Vagina (tissue), 2 donors: ENCODE measurements at regions of chr17 and their contacts with region 1.

Region 1: GRCh38 chr17:76121932-76122430 is 18.4 kb upstream of the EXOC7 start:
- DNase-seq: no peak
- H3K4me3 ChIP-seq: peak overlapping the region; percentile 40 to 42
- H3K27ac ChIP-seq: peak overlapping the region; percentile 57
- H3K4me1 ChIP-seq: peaks cover 10% of the 10 kb centered on the region
- H3K27me3 ChIP-seq: no peaks in the 10 kb centered on the region
- CTCF ChIP-seq: no peak
- POLR2A ChIP-seq: no peak

Region 2: DNA sequence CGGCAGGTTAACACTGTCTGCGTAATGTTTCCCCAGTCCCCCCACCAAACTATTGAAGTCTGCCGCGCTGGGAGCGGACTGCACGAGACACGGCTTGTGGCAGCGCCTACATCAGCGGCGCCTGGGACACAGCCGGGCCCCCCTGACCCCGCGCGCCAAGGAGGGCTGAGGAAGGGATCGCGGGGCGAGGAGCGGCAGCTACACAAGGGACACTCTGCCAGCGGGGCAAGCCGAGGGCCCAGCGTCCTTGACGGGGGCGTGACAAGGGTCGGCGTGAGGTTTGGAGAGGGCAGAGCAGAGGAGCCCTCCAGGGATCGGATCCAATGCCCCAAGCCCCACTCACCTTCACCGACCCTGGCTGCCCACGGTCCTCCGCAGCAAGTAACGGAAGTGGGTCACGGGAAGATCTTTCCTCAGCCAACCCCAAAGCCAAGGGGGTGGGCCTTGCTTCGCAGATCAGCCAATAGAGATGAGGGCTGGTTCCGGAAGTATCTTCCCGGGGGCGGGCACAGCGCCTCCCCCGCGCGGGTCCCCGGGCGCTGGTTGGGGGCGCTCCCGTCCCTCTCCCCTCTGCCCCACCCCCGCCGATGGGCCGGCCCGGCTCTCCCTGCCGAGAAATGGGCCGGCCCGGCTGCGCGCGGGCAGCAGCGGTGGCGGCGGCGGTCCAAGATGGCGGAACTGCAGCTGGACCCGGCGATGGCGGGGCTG is 1075.2 kb before region 1 on chr17 and contains the starts of genes ATP5PD and KCTD2:
- intact Hi-C with region 1: no loop called
- DNase-seq: peak in 1 of 2 donors; percentile 97
- H3K4me3 ChIP-seq: peak within 1 kb of the TSS; percentile 84 to 90
- H3K27ac ChIP-seq: peak within 1 kb of the TSS; percentile 95
- H3K4me1 ChIP-seq: peaks cover 36% of the 10 kb centered on the region
- H3K27me3 ChIP-seq: no peaks in the 10 kb centered on the region
- CTCF ChIP-seq: no peak
- POLR2A ChIP-seq: peak in 1 of 2 donors; percentile 87
- total RNA-seq, gene ATP5PD: 149 TPM
- total RNA-seq, gene KCTD2: 17.2 TPM

Region 3: GRCh38 chr17:76166168-76166567 is 44.2 kb after region 1 on chr17:
- intact Hi-C with region 1: no loop called
- DNase-seq: no peak
- H3K4me3 ChIP-seq: no peak overlapping the region
- H3K27ac ChIP-seq: no peak overlapping the region
- H3K4me1 ChIP-seq: no peaks in the 10 kb centered on the region
- H3K27me3 ChIP-seq: no peaks in the 10 kb centered on the region
- CTCF ChIP-seq: no peak
- POLR2A ChIP-seq: no peak

Region 4: GRCh38 chr17:76182016-76182764 is 60.2 kb after region 1 on chr17:
- intact Hi-C with region 1: loop called (anchors 5 kb)
- DNase-seq: no peak
- H3K4me3 ChIP-seq: no peak overlapping the region
- H3K27ac ChIP-seq: no peak overlapping the region
- H3K4me1 ChIP-seq: no peaks in the 10 kb centered on the region
- H3K27me3 ChIP-seq: no peaks in the 10 kb centered on the region
- CTCF ChIP-seq: peak; percentile 66 to 84 (median 80)
- POLR2A ChIP-seq: no peak

Region 5: DNA sequence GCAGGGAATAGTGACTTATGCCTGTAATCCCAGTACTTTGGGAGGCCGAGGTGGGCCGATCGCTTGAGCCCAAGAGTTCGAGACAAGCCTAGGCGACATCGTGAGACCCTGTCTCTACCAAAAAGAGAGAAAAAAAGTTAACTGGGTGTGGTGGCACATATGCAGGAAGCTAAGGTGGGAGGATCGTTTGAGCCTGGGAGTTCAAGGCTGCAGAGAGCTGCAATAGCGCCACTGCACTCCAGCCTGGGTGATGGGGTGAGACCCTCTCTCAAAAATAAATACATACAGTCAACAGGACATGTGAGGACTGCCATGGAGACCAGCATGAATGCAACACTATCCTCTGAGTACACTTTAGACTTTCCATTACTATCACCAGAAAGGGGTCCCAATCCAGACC is 479.1 kb after region 1 on chr17:
- intact Hi-C with region 1: no loop called
- DNase-seq: no peak
- H3K4me3 ChIP-seq: no peak overlapping the region
- H3K27ac ChIP-seq: no peak overlapping the region
- H3K4me1 ChIP-seq: peaks cover 26% of the 10 kb centered on the region
- H3K27me3 ChIP-seq: no peaks in the 10 kb centered on the region
- CTCF ChIP-seq: no peak
- POLR2A ChIP-seq: no peak